ENCODE measurements at regions of chr11 and their contacts with region 1.

Region 1: DNA sequence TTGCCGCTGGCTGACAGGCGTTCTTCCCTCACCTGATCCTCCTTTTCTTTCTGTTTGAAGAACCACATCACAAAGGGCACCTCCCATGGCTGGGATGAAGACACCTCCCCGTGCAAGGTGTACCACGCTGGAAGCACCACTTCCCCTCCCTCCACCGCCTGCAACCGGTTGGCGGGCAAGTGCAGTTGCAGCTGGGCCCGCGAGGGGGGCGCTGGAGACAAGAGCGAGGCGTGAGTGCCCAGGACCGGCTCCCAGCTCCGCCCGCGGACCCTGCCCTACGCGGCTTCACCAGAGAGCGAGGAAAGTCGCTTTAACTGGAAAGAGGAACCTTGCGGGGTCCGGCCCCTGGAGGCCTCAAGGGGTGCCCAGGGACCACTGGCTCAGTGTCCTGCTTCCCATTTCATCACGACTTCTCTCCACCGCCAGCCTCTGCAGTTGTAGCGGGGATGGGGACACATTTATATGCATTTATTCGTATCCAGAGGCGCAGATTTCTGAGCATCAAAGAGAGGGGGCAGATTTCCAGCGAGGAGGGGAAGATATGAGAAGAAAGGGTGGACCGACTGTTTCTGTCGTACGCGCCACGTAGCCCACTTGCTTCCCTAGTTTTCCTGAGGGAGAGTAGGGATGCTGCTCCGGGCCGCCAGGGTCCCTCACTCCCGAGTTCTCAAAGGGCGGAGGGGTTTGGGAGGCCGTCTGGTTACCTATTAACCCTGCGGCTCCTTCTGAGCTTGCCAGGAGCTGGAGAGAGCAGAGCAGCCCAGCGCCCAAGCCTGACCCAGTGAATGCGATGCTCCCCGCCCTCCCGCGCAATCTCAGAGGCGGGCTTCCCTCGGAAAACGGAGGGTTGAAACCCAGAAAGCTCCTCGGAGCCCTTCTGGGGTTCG is 3.5 kb downstream of the ESAM start:
- DNase-seq: peak; percentile 57 to 88 (median 74)
- H3K4me3 ChIP-seq: peak overlapping the region; percentile 19 to 72 (median 53)
- H3K27ac ChIP-seq: peak overlapping the region in 45 of 59 donors; percentile 1 to 89 (median 59)
- H3K27me3 ChIP-seq: peaks cover 0 to 74% (median 28%) of the 10 kb centered on the region in 45 donors
- CTCF ChIP-seq: peak; percentile 14 to 86 (median 72)

Region 2: DNA sequence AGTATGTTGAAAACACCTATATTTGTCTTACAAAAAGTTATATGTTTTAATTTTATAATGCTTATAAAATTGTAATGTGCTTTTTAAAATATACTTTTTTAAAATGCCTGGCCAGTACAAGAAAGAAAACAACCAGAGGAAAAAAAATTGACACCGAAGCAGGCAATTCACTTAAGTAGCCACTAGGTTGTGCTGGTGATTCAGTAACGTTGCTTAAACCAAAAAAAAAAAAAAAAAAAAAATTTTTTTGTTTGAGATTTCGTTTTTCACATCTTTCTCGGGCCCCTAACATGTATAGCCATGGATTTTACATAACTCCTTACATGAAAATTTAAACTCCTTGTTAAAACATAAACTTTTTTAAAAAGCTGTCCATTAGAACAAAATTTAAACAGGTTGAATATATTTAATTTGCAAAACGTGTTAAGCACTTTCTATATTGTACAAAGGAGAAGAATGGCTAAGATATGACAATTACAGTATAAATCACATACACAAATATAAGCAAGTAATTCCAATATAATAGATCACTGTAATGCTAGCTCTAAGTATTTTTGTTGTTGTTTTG is 343.1 kb before region 1 on chr11:
- intact Hi-C with region 1: loop called in 1 of 2 experiments (anchors 10 kb)
- DNase-seq: no peak
- H3K4me3 ChIP-seq: no peak overlapping the region
- H3K27ac ChIP-seq: peak overlapping the region in 18 of 59 donors; percentile 8 to 66 (median 37)
- H3K27me3 ChIP-seq: peaks cover 0 to 14% (median 0%) of the 10 kb centered on the region in 45 donors
- CTCF ChIP-seq: peak; percentile 31 to 84 (median 64)

Region 3: GRCh38 chr11:124800226-124800929 is 41.8 kb after region 1 on chr11 and contains the start of gene MSANTD2:
- intact Hi-C with region 1: loop called in 1 of 2 experiments (anchors 5 kb)
- DNase-seq: peak; percentile 70 to 93 (median 81)
- H3K4me3 ChIP-seq: peak within 1 kb of the TSS; percentile 67 to 97 (median 90)
- H3K27ac ChIP-seq: peak within 1 kb of the TSS; percentile 94 to 100 (median 99)
- H3K27me3 ChIP-seq: no peaks in the 10 kb centered on the region
- CTCF ChIP-seq: peak in 32 of 56 donors; percentile 4 to 56 (median 29)
- total RNA-seq, gene MSANTD2: 9.8 to 28.2 (median 17.7) TPM